GM10248 (cell line): ENCODE measurements at regions of chr10 and their contacts with region 1.

Region 1: DNA sequence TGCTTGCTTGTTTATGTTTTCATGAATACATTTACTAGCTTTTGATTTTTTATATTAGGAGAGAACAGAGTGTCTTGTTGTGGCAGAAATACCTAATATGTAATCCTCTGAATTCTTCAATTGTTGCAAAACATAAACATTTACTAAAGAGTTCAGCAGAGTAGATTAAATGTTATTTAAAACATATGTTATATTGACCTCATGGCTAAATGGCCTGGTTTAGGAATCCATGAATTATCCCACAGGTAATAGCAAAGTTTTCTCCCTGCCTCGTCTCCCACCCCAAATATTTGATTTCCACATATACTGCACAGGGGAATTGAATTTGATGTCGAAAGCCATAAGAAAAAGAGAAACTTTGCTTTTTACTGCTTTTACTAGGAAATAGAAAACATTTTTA is 111.8 kb downstream of the ADK start:
- DNase-seq: no peak
- CTCF ChIP-seq: no peak

Region 2: DNA sequence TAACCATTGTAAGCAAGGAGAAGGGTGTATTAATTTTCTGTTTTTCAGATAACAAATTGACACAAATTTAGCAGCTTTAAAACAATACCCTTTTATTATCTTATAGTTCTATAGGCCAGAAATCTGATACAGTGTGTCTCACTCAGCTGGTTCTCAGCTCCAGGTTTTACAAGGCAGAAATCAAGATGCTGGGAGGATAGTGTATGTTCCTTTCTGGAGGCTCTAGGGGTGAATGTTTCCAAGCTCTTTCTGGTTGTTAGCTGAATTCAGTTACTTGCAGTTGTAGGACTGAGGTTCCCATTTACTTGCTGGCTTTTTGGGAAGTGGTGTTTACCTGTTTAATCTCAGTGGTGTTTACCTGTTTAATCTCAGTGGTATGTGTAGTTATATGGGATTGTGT is 13.6 kb after region 1 on chr10:
- CTCF ChIA-PET with region 1: interaction called, 14 read pairs
- POLR2A ChIA-PET with region 1: no interaction called
- DNase-seq: no peak
- CTCF ChIP-seq: no peak